ENCODE measurements at regions of chr17 and their contacts with region 1.

Region 1: GRCh38 chr17:69523244-69523861 is 108.9 kb downstream of the MAP2K6 start:
- DNase-seq: peak; percentile 26
- H3K4me3 Mint-ChIP-seq: no peak overlapping the region
- H3K27ac Mint-ChIP-seq: no peak overlapping the region
- H3K4me1 Mint-ChIP-seq: peaks cover 3% of the 10 kb centered on the region
- H3K27me3 Mint-ChIP-seq: no peaks in the 10 kb centered on the region

Region 2: DNA sequence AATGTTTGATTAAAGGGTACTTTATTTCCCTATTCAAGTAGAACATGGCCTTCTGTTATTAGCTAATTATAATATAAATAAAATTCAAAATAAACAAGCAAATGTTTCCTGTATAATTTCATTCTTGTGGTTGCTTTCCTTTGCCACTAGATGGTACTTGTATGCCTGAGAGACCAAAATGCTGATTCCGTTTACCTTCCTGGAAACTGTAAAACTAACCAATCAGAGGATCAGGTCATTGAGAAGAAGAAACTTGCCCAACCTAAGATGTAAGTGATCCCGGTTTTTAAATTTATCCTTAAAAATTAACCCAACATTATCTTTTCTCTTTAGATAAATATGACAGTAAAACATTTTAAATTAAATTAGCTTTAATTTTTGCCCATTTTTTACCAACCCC is 188.3 kb before region 1 on chr17:
- CTCF ChIA-PET with region 1: interaction called, 31 read pairs
- DNase-seq: no peak
- H3K4me3 Mint-ChIP-seq: no peak overlapping the region
- H3K27ac Mint-ChIP-seq: no peak overlapping the region
- H3K4me1 Mint-ChIP-seq: peaks cover 5% of the 10 kb centered on the region
- H3K27me3 Mint-ChIP-seq: peaks cover 10% of the 10 kb centered on the region

Region 3: DNA sequence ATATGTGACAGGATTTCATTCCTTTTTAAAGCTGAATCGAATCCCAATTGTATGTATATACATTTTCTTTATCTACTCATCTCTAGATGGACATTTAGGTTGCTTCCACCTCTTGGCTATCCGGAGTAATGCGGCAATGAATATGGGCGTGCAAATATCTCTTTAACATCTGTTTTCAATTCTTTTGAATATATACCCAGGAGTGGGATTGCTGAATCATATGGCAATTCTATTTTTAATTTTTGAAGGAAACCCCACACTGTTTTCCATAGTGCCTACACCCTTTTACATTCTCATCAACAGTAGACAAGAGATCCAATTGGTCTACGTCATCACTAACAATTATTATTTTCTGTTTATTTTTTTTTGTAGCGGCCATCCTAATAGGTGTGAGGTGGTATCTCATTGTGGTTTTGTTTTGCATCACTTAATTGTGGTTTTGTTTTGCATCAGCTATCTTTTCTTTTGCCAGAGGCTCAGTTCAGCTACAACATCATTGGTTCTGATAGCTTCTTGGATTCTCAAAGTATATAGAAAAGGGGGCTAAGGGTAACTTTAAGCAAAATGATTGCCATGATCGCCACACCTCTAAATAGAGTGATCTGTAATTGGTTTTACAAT is 134.4 kb before region 1 on chr17:
- CTCF ChIA-PET with region 1: interaction called, 23 read pairs
- DNase-seq: no peak
- H3K4me3 Mint-ChIP-seq: no peak overlapping the region
- H3K27ac Mint-ChIP-seq: no peak overlapping the region
- H3K4me1 Mint-ChIP-seq: no peaks in the 10 kb centered on the region
- H3K27me3 Mint-ChIP-seq: peaks cover 4% of the 10 kb centered on the region

Measured in activated naive CD4-positive, alpha-beta T cell treated with anti-CD3 and anti-CD28 coated beads, Interleukin-2, amount 10 ng/mL, durations not matched to agents 7 days and 5 days (primary cell).